Ascending aorta (tissue), 2 donors: ENCODE measurements at regions of chr6 and their contacts with region 1.

Region 1: DNA sequence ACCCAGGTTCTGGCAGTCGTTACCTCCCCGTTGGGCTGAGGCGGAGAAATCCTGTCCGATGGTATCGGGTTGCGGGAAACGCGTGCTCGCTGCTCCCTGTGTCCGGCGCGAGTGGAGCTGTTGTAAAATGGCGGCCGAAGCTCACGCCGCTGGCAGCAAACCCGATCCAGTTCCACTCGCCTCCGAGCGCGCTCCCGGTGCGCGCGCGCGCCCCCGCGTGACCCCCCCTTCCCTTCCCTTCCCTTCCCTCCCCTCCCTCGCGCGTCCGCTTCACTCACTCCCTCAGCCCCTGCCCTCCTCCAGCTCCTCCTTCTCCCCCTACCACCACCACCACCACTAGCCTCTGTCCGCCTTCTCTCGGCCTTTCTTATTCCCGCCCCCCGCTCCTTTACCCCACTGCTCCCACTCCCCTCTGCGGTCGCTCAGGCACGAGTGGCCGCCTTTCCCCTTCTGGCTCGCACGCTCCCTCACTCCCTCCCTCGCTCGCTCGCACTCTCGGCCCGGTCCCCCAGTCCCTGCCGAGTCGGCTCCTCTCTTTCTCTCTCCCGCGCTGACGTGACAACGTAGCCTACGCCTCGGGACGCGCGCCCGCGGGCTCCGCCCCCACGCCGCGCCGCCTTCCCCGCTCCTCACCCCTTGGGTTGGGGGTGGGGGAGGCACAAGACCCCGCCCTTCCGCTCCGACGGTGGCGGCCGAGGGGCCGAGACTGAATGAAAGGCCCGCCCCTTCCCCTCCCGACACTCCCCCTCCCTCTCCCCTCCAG is at the start of gene SYNCRIP:
- DNase-seq: peak; percentile 95 to 100
- H3K4me3 ChIP-seq: peak within 1 kb of the TSS; percentile 93 to 95
- H3K27ac ChIP-seq: peak within 1 kb of the TSS; percentile 96 to 97
- H3K4me1 ChIP-seq: peaks cover 0 to 16% of the 10 kb centered on the region in 2 donors
- H3K27me3 ChIP-seq: no peaks in the 10 kb centered on the region
- CTCF ChIP-seq: no peak
- total RNA-seq, gene SYNCRIP: 25.3 TPM

Region 2: DNA sequence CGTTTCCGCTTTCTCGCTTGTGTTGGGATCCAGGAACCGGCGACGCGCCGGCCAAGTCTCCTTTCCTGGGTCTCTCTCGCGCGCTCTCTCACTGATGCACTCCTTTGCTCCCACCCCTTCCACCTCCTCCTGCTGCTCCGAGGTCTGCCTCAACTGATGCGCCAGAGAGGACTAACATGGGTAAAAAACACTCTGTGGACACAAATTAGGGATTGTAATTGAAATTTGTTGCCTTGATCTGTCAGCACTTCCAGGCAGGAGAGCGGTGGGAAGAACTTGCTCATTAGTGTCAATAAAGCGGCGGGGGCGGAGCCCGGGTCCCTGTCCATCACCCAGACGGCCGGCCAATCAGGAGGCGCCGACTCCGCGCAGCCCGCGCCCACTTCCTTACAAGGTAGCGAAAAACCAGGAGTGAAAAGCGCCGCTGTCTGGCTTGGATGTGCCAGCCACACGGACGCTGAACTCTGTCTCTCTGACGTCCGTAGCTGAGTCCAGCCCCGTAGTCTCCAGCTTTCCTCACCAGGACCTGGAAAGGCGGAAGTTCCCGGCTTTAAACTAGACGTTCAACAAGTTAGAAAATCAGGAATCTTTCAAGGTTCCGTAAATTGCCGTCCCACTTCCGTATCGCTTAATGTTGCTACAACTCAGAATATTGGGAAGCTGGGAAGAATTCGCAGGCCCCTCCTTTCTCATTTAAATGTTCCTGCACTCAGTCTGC is 878.5 kb before region 1 on chr6 and contains the start of gene TBX18:
- intact Hi-C with region 1: loop called (anchors 5 kb)
- DNase-seq: peak; percentile 94 to 99
- H3K4me3 ChIP-seq: peak within 1 kb of the TSS; percentile 56 to 100
- H3K27ac ChIP-seq: peak within 1 kb of the TSS; percentile 98 to 100
- H3K4me1 ChIP-seq: no peaks in the 10 kb centered on the region
- H3K27me3 ChIP-seq: no peaks in the 10 kb centered on the region
- CTCF ChIP-seq: no peak
- total RNA-seq, gene TBX18: 81.0 TPM

Region 3: GRCh38 chr6:85449818-85450759 is 192.9 kb before region 1 on chr6 and contains the start of gene NT5E:
- intact Hi-C with region 1: loop called (anchors 5 kb)
- DNase-seq: peak; percentile 47 to 94
- H3K4me3 ChIP-seq: peak within 1 kb of the TSS; percentile 75 to 88
- H3K27ac ChIP-seq: peak within 1 kb of the TSS; percentile 93 to 97
- H3K4me1 ChIP-seq: peaks cover 0 to 9% of the 10 kb centered on the region in 2 donors
- H3K27me3 ChIP-seq: no peaks in the 10 kb centered on the region
- CTCF ChIP-seq: peak in 1 of 3 experiments; percentile 4
- total RNA-seq, gene NT5E: 143 TPM

Region 4: GRCh38 chr6:85593438-85594196 is 49.3 kb before region 1 on chr6 and contains the start of gene SNX14:
- intact Hi-C with region 1: loop called (anchors 1 kb)
- DNase-seq: peak; percentile 78 to 97
- H3K4me3 ChIP-seq: peak within 1 kb of the TSS; percentile 66 to 87
- H3K27ac ChIP-seq: peak within 1 kb of the TSS; percentile 95 to 96
- H3K4me1 ChIP-seq: peaks cover 0 to 15% of the 10 kb centered on the region in 2 donors
- H3K27me3 ChIP-seq: no peaks in the 10 kb centered on the region
- CTCF ChIP-seq: peak in 1 of 3 experiments; percentile 25
- total RNA-seq, gene SNX14: 63.2 TPM

Region 5: GRCh38 chr6:85678602-85679444 is 35.9 kb after region 1 on chr6:
- intact Hi-C with region 1: loop called (anchors 1 kb)
- DNase-seq: peak; percentile 96 to 99
- H3K4me3 ChIP-seq: peak overlapping the region; percentile 90
- H3K27ac ChIP-seq: peak overlapping the region; percentile 91 to 94
- H3K4me1 ChIP-seq: peaks cover 0 to 21% of the 10 kb centered on the region in 2 donors
- H3K27me3 ChIP-seq: no peaks in the 10 kb centered on the region
- CTCF ChIP-seq: no peak

Region 6: GRCh38 chr6:85865420-85866369 is 222.7 kb after region 1 on chr6:
- intact Hi-C with region 1: loop called (anchors 10 kb)
- DNase-seq: no peak
- H3K4me3 ChIP-seq: peak overlapping the region; percentile 45 to 68
- H3K27ac ChIP-seq: peak overlapping the region; percentile 82 to 85
- H3K4me1 ChIP-seq: peaks cover 0 to 19% of the 10 kb centered on the region in 2 donors
- H3K27me3 ChIP-seq: no peaks in the 10 kb centered on the region
- CTCF ChIP-seq: no peak

Region 7: DNA sequence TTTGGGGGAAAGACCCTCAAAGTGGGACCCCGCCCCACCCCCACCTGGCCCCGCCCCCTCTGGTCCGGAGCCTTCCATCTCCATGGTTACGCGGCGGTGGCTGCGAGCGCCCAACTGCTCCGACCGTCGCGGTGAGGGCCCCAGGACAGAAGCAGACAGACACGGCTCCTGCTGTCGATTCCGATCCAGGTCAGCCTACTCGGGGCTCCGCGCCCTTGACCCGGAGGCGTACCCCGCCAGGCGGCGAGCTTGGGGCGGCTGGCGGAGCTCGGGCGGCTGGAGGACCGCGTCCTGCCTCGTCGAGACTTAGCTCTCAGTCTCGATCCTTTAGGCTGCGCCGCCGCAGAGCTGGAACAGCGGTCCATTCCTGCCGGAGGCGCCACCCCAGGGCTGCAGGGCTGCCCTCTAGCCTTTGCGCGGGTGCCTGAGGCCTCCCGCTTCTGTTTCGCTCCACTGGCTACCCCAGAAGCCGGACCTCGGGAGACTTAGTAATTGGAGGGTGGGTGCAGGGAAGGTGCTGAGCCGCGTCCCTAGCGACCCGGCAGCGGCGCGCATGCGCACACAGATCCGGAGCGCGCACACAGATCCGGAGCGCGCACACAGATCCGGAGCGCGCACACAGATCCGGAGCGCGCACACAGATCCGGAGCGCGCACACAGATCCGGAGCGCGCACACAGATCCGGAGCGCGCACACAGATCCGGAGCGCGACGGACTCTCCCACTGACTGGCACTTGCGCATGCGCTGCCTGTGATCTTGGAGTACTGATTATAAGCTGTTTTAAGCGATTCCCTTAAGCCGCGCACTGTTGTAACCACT is 1765.2 kb after region 1 on chr6 and contains the start of gene CFAP206:
- intact Hi-C with region 1: loop called (anchors 5 kb)
- DNase-seq: peak; percentile 21 to 88
- H3K4me3 ChIP-seq: peak within 1 kb of the TSS; percentile 84 to 93
- H3K27ac ChIP-seq: peak within 1 kb of the TSS; percentile 75 to 83
- H3K4me1 ChIP-seq: no peaks in the 10 kb centered on the region
- H3K27me3 ChIP-seq: no peaks in the 10 kb centered on the region
- CTCF ChIP-seq: peak in 1 of 3 experiments; percentile 5
- total RNA-seq, gene CFAP206: 1.4 TPM